ENCODE measurements at regions of chr6 and their contacts with region 1.

Region 1: DNA sequence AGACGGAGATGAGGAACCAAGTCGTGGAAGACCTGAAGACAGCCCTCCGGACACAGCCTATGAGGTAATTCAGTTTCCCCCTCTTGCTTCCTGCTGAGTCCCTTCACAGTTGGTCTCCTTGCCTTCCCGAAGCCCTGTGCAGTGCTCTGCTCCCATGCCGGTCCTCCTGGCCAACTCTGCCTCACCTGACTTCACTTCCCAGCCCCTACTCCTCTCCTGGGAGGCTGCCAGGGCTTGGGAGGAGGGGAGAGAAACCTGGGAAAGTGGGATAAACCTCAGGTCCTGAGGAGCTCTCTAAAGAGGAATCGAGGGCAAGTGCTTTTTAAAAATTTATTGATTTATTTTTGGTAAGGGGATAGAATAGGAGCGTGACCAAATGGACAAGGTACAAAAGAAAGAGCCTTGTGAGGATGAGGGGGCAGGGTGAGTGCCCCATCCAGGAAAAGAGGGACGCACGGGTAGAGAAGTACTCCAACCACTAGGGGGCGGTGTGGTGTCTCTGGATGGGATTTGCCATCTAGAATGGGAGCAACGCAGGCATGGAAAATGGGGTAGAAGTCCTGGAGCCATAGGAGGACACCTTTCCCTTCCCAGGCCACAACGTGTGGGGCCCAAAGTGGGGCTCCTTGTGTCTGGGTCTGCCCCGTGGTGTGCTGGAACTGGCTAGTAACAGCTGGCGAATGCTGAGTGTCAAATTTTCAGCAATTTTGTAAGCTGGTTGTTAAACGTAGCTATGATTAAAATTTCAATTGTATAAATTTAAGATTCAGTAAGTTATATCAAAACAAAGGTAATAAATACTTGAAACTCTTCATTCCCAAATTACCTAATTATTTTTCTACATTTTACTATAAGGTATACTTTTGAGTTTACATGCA is 69.0 kb downstream of the MOCS1 start:
- DNase-seq: no peak
- ATAC-seq: peak; percentile 73
- H3K4me3 ChIP-seq: no peak overlapping the region
- H3K27ac ChIP-seq: no peak overlapping the region
- H3K4me1 ChIP-seq: no peaks in the 10 kb centered on the region
- H3K27me3 ChIP-seq: no peaks in the 10 kb centered on the region; a peak in 2 of 4 replicates
- CTCF ChIP-seq: peak; percentile 65 to 82 (median 82)
- EP300 ChIP-seq: no peak
- POLR2A ChIP-seq: no peak
- RAD21 ChIP-seq: peak; percentile 56

Region 2: GRCh38 chr6:39377539-39377950 is 487.7 kb before region 1 on chr6:
- CTCF ChIA-PET with region 1: interaction called, 13 read pairs
- POLR2A ChIA-PET with region 1: no interaction called
- RAD21 ChIA-PET with region 1: interaction called, 4 read pairs
- SMC1A ChIA-PET with region 1: interaction called, 5 read pairs
- in situ Hi-C with region 1: no loop called
- intact Hi-C with region 1: no loop called
- DNase-seq: no peak
- ATAC-seq: peak; percentile 95
- H3K4me3 ChIP-seq: no peak overlapping the region
- H3K27ac ChIP-seq: no peak overlapping the region
- H3K4me1 ChIP-seq: no peaks in the 10 kb centered on the region
- H3K27me3 ChIP-seq: no peaks in the 10 kb centered on the region
- CTCF ChIP-seq: peak; percentile 50 to 73 (median 67)
- EP300 ChIP-seq: no peak
- POLR2A ChIP-seq: no peak
- RAD21 ChIP-seq: peak; percentile 75

Region 3: DNA sequence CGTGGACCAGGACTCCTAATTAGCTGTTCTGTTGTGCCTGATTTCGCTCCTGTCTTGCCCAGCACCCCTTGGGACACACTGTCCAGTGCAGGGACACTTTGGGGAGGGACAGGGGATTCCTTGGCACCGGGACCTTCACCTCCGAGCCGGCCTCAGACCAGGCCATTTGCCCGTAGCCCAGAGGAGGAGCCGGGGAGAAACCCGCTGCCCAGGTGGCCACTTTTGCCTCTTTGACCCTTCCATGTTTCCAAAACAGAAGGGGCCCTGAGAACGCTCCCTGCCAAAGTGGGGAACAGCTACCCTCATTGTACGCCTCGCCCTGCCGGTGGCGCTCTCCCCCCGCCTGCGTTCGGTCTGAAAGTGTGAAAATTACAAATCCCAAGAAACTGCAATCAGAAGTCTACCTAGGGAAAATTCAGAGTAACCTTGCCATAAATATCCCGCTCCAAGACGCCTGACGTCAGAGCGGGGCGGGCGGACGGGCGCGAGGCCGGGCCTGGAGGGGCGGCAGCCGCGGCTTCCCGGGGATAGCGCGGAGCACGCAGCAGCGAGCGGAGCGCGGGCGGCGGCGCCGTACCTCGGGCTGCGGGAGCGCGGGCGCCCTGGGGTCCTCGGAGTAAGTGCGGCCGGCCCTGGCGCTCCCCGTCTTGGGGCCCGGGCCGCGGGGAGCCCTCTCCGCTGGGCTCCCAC is 73.3 kb before region 1 on chr6 and contains the start of gene DAAM2:
- CTCF ChIA-PET with region 1: interaction called, 11 read pairs
- POLR2A ChIA-PET with region 1: no interaction called
- RAD21 ChIA-PET with region 1: no interaction called
- SMC1A ChIA-PET with region 1: no interaction called
- in situ Hi-C with region 1: no loop called
- intact Hi-C with region 1: no loop called
- DNase-seq: no peak
- ATAC-seq: no peak
- H3K4me3 ChIP-seq: no peak within 1 kb of the TSS
- H3K27ac ChIP-seq: no peak within 1 kb of the TSS
- H3K4me1 ChIP-seq: no peaks in the 10 kb centered on the region
- H3K27me3 ChIP-seq: peaks cover 0 to 8% of the 10 kb centered on the region in 2 experiments; a peak in 2 of 4 replicates
- CTCF ChIP-seq: no peak
- EP300 ChIP-seq: no peak
- POLR2A ChIP-seq: no peak
- RAD21 ChIP-seq: no peak
- polyA plus RNA-seq, gene DAAM2: not detected

Region 4: DNA sequence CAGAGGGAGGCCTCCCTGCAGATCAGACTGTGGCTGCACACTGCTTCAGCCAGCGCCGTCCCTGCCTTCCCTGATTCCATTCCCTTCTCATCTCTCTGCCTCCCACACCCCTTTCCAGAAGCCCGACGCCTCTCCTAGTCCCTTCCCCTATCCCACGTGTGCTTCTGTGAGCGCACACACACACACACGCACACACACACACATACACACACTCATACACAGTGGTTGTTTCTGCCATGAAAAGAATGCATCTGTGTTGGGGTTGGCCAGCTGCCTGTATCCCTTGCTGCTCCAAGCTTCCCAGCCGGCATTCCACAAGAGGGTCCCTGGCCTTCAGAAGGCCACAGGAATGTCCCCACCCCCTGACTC is 17.3 kb after region 1 on chr6:
- CTCF ChIA-PET with region 1: interaction called, 98 read pairs
- POLR2A ChIA-PET with region 1: no interaction called
- RAD21 ChIA-PET with region 1: interaction called, 3 read pairs
- SMC1A ChIA-PET with region 1: interaction called, 15 read pairs
- in situ Hi-C with region 1: no loop called
- intact Hi-C with region 1: no loop called
- DNase-seq: no peak
- ATAC-seq: no peak
- H3K4me3 ChIP-seq: no peak overlapping the region
- H3K27ac ChIP-seq: no peak overlapping the region
- H3K4me1 ChIP-seq: no peaks in the 10 kb centered on the region
- H3K27me3 ChIP-seq: peaks cover 0 to 3% of the 10 kb centered on the region in 2 experiments; a peak in 2 of 4 replicates
- CTCF ChIP-seq: no peak
- EP300 ChIP-seq: no peak
- POLR2A ChIP-seq: no peak
- RAD21 ChIP-seq: no peak

Region 5: GRCh38 chr6:40308533-40309306 is 443.5 kb after region 1 on chr6:
- CTCF ChIA-PET with region 1: interaction called, 20 read pairs
- POLR2A ChIA-PET with region 1: no interaction called
- RAD21 ChIA-PET with region 1: interaction called, 7 read pairs
- SMC1A ChIA-PET with region 1: interaction called, 12 read pairs
- in situ Hi-C with region 1: no loop called
- intact Hi-C with region 1: loop called (anchors 5 kb)
- DNase-seq: peak; percentile 11
- ATAC-seq: peak; percentile 94
- H3K4me3 ChIP-seq: no peak overlapping the region
- H3K27ac ChIP-seq: no peak overlapping the region
- H3K4me1 ChIP-seq: no peaks in the 10 kb centered on the region
- H3K27me3 ChIP-seq: peaks cover 3 to 9% of the 10 kb centered on the region in 2 experiments; a peak in 3 of 4 replicates
- CTCF ChIP-seq: peak; percentile 84 to 91 (median 89)
- EP300 ChIP-seq: no peak
- POLR2A ChIP-seq: no peak
- RAD21 ChIP-seq: peak; percentile 73

Measured in GM12878 (cell line).